ENCODE measurements at regions of chr1 and their contacts with region 1.

Region 1: DNA sequence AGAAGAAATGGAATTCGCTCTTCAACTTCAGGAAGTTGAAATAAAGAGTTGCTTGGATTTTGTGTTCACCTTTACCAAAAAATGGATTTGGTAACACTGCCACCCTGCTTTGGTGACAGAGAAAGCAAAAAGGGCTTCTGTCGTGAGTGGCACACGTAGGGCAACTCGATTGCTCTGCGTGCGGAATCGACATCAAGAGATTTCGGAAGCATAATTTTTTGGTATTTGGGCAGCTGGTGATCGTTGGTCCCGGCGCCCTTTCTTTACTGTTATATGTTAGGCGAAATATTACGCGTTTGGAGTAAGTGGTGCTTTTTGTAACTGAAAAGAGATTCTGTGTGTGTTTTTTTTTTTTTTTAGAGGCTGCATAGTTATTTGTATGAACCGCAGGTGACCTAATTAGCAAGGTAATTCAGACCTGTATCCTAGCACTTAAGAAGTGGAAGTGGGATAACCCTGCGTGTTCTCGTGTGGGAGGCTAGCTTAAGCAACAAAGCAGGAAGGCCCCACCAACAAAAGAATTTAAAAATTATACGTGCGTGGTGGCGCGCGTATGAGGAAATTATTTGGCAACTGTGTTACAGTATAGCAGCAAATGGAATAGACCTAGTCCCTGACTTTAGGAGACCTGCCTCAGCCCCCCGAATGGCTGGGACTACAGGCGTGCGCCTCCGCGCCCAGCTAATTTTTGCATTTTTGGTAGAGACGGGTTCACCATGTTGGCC is at the start of gene RNU11:
- DNase-seq: peak; percentile 74 to 98 (median 80)
- ATAC-seq: peak; percentile 81
- H3K4me3 ChIP-seq: peak within 1 kb of the TSS; percentile 28
- H3K27ac ChIP-seq: peak within 1 kb of the TSS; percentile 95
- H3K4me1 ChIP-seq: peaks cover 28 to 34% of the 10 kb centered on the region in 2 experiments; a peak in 4 of 5 replicates
- H3K27me3 ChIP-seq: no peaks in the 10 kb centered on the region
- CTCF ChIP-seq: peak; percentile 1 to 32 (median 7); a peak in 3 of 6 replicates
- EP300 ChIP-seq: peak; percentile 89
- POLR2A ChIP-seq: peak; percentile 100
- RAD21 ChIP-seq: peak; percentile 38 to 47
- polyA plus RNA-seq, gene RNU11: not detected

Region 2: DNA sequence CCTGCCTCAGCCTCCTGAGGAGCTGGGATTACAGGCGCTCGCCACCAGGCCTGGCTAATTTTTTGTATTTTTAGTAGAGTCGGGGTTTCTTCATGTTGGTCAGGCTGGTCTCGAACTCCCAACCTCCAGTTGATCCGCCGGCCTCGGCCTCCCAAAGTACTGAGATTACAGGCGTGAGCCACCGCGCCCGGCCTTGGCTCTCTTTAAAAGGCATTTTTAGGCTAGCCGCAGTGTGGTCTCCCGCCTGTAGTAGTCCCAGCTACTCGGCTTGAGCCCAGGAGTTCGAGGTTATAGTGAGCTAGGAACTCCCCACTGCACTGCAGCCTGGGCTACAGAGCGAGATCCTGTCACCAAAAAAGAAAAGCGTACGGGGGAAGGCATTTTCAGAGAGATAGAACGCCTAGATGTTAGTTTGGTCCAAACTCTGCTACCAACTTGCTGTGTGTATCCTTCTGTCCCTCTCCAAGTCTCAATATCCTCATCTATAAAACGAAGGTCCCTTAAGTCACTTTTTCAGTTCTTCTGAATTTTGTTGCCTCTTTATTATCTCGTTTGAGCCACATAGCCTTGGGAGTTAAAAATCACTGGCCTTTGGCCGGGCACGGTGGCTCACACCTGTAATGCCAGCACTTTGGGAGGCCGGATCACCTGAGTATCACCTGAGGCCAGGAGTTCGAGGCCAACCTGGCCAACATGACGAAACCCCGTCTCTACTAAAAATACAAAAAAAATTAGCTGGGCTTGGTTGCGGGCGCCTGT is 319.1 kb before region 1 on chr1:
- CTCF ChIA-PET with region 1: no interaction called
- POLR2A ChIA-PET with region 1: interaction called, 12 read pairs
- in situ Hi-C with region 1: no loop called
- intact Hi-C with region 1: no loop called
- DNase-seq: peak in 2 of 4 experiments; percentile 27 to 70
- ATAC-seq: peak; percentile 74
- H3K4me3 ChIP-seq: peak overlapping the region; percentile 72
- H3K27ac ChIP-seq: peak overlapping the region; percentile 84
- H3K4me1 ChIP-seq: peaks cover 17 to 33% of the 10 kb centered on the region in 2 experiments
- H3K27me3 ChIP-seq: no peaks in the 10 kb centered on the region
- CTCF ChIP-seq: no peak
- EP300 ChIP-seq: no peak
- POLR2A ChIP-seq: no peak
- RAD21 ChIP-seq: peak in 1 of 2 experiments; percentile 7; a peak in 1 of 4 replicates

Region 3: DNA sequence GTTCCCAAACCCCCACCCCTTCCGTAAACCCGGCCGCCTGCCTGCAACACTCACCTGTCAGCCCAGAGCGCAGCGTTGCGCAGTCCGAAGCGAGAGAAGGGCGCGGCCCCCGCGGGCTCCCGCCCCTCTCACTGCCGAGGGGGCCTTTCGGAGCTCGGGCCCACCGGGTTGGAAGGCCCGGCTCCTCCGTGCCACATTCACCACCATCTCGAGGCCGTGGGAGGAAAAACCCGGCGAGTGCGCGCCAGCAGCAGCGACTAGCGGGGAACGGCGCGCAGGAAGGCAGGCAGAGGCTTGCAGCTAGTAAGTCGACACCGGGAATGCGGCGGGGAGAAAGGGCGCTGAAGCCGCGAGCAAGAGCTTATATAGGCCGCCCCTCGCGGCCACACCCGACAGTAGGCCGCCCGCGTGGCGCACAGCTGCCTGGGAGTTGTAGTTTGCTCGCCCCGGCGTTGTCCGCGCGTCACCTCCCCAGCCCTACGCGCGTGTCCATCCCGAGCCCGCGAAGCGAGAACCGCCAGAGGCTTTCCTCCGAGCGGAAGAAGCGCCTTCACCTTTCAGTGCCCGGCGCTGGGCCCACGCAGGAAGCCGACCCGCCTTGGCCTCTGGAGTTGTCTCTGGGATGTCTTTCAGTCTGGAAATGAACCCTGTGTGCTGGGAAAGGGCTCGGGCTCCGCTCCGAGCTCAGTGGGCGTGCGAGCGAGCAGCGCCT is 66.9 kb before region 1 on chr1:
- CTCF ChIA-PET with region 1: no interaction called
- POLR2A ChIA-PET with region 1: interaction called, 66 read pairs
- in situ Hi-C with region 1: no loop called
- intact Hi-C with region 1: loop called (anchors 2 kb)
- DNase-seq: peak; percentile 93 to 99 (median 96)
- ATAC-seq: peak; percentile 92
- H3K4me3 ChIP-seq: peak overlapping the region; percentile 81
- H3K27ac ChIP-seq: peak overlapping the region; percentile 81
- H3K4me1 ChIP-seq: peaks cover 18 to 24% of the 10 kb centered on the region in 2 experiments; a peak in 4 of 5 replicates
- H3K27me3 ChIP-seq: no peaks in the 10 kb centered on the region
- CTCF ChIP-seq: peak in 2 of 3 experiments; percentile 1 to 25; a peak in 2 of 6 replicates
- EP300 ChIP-seq: peak; percentile 67
- POLR2A ChIP-seq: peak; percentile 100
- RAD21 ChIP-seq: peak in 1 of 2 experiments; percentile 21; a peak in 2 of 4 replicates

Region 4: DNA sequence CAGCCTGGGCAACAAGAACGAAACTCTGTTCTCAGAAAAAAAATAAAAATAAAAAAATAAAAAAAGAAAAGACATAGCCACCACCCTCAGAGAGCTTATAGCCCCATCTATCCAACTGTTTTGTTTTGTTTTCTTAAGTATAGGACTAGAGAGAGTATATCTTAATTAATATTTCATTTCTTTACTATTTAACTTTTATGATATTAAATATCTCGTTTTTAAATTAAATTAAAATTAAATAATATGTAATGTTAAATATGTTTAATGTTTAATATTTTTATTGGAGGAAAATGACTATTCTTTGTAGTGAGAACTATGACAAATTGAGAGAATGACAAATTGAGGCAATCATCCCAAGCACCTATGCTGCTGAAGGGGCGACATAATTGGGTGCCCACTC is 55.0 kb after region 1 on chr1:
- CTCF ChIA-PET with region 1: no interaction called
- POLR2A ChIA-PET with region 1: interaction called, 14 read pairs
- in situ Hi-C with region 1: no loop called
- intact Hi-C with region 1: no loop called
- DNase-seq: no peak
- ATAC-seq: no peak
- H3K4me3 ChIP-seq: no peak overlapping the region
- H3K27ac ChIP-seq: no peak overlapping the region
- H3K4me1 ChIP-seq: no peaks in the 10 kb centered on the region
- H3K27me3 ChIP-seq: no peaks in the 10 kb centered on the region
- CTCF ChIP-seq: no peak
- EP300 ChIP-seq: no peak
- POLR2A ChIP-seq: no peak
- RAD21 ChIP-seq: no peak

Region 5: GRCh38 chr1:28756846-28757245 is 108.2 kb after region 1 on chr1:
- CTCF ChIA-PET with region 1: no interaction called
- POLR2A ChIA-PET with region 1: interaction called, 26 read pairs
- in situ Hi-C with region 1: no loop called
- intact Hi-C with region 1: no loop called
- DNase-seq: no peak
- ATAC-seq: peak; percentile 59
- H3K4me3 ChIP-seq: no peak overlapping the region
- H3K27ac ChIP-seq: no peak overlapping the region
- H3K4me1 ChIP-seq: peaks cover 5 to 12% of the 10 kb centered on the region in 2 experiments; a peak in 3 of 5 replicates
- H3K27me3 ChIP-seq: no peaks in the 10 kb centered on the region
- CTCF ChIP-seq: peak; percentile 24 to 51 (median 36); a peak in 4 of 6 replicates
- EP300 ChIP-seq: no peak
- POLR2A ChIP-seq: no peak
- RAD21 ChIP-seq: peak in 1 of 2 experiments; percentile 37; a peak in 1 of 4 replicates

Region 6: DNA sequence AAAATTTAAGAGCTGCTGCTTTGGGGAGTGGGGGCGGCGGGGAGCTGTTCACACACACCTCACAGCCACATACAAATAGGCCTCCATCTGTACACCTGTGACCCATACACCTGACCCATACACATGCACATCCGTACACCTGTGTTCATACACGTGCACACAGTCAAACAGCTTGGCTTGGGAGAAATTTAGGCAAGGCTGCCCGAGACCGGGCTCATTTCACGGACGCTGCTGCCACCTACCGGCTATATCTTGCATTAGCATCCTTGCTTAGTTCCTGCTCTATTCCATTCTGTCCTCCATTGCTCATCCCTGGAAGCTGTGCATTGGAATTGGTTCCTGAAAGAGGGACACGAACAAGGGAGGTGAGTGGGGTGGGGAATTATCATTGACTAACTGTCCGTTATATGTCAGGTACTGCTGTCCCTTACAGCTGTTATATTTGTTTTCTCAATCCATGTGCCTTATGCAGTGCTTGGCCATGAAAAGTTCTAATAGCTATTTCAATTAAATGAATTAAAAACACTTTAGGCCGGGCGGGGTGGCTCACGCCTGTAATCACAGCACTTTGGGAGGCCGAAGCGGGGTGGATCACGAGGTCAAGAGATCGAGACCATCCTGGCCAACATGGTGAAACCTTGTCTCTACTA is 228.6 kb after region 1 on chr1:
- CTCF ChIA-PET with region 1: interaction called, 4 read pairs
- POLR2A ChIA-PET with region 1: interaction called, 57 read pairs
- in situ Hi-C with region 1: no loop called
- intact Hi-C with region 1: loop called (anchors 1 kb)
- DNase-seq: peak; percentile 81 to 92 (median 82)
- ATAC-seq: peak; percentile 85
- H3K4me3 ChIP-seq: no peak overlapping the region
- H3K27ac ChIP-seq: no peak overlapping the region
- H3K4me1 ChIP-seq: peaks cover 21 to 22% of the 10 kb centered on the region in 2 experiments
- H3K27me3 ChIP-seq: no peaks in the 10 kb centered on the region
- CTCF ChIP-seq: peak; percentile 94 to 99 (median 97)
- EP300 ChIP-seq: no peak
- POLR2A ChIP-seq: no peak
- RAD21 ChIP-seq: peak; percentile 95 to 98

Measured in K562 (cell line).